ENCODE measurements at regions of chr10 and their contacts with region 1.

Region 1: DNA sequence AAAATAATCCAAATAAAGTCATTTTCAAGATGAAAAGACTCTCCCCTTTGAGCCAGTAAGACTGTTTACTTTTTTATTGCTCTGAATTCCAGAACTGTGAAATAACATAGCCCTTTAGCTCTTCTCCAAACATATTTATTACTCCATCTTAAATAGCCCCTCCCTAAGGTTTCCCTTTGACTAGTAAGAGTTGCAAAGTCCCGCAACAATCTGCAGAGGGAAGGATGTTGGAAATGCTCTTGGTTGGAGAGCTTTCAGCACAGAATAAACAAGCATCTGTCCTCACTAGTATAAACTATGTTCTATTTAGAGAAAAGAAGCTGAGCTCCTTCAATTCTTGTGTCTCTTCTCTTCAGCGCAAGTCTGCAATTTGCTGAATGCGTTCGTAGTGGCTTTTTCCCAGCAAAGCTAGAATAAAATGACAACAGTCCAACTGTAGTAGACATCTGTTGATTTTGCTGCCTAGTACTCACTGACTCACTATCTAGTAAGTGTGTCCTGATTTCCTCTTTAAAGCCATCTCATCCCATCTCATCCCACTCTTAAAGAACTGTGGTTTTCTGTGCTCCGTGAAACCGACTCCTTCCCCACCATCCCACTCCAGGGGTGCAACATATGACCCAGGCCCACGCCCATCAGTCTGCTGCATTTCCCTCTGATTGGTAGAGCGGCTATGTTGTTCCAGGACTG is 104.0 kb downstream of the FAM107B start:
- DNase-seq: peak in 1 of 2 experiments; percentile 60
- H3K4me3 ChIP-seq: no peak overlapping the region
- H3K4me3 Mint-ChIP-seq: peak overlapping the region; percentile 61
- H3K27ac Mint-ChIP-seq: peak overlapping the region; percentile 71
- H3K4me1 ChIP-seq: peaks cover 54% of the 10 kb centered on the region
- H3K4me1 Mint-ChIP-seq: peaks cover 43% of the 10 kb centered on the region
- H3K27me3 ChIP-seq: no peaks in the 10 kb centered on the region
- H3K27me3 Mint-ChIP-seq: no peaks in the 10 kb centered on the region
- CTCF ChIP-seq: no peak

Region 2: DNA sequence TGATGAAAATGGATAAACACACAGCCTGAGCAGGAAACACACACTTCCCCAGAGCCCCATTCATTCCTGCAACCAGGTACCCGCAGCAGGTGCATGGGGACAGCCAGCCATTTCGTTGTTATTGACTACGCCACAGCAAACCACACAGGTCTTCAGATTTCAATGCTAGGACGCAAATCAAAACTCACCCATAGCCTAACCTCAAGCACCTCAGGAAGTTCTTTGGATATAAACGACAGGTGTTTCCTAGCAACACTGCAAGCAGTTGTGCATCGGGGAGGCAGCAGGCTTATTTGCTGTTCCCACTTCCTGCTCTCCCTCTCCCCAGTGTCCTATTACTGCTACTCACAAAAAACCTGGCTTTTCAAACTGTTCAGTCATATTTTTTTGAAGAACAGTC is 163.5 kb before region 1 on chr10:
- CTCF ChIA-PET with region 1: no interaction called
- POLR2A ChIA-PET with region 1: no interaction called
- intact Hi-C with region 1: no loop called
- DNase-seq: no peak
- H3K4me3 ChIP-seq: no peak overlapping the region
- H3K4me3 Mint-ChIP-seq: no peak overlapping the region
- H3K27ac Mint-ChIP-seq: peak overlapping the region; percentile 19
- H3K4me1 ChIP-seq: 0 out of 2 replicates have a peak, but pooled peaks cover 4% of the 10 kb centered on the region
- H3K4me1 Mint-ChIP-seq: no peaks in the 10 kb centered on the region
- H3K27me3 ChIP-seq: no peaks in the 10 kb centered on the region
- H3K27me3 Mint-ChIP-seq: no peaks in the 10 kb centered on the region
- CTCF ChIP-seq: no peak

Region 3: DNA sequence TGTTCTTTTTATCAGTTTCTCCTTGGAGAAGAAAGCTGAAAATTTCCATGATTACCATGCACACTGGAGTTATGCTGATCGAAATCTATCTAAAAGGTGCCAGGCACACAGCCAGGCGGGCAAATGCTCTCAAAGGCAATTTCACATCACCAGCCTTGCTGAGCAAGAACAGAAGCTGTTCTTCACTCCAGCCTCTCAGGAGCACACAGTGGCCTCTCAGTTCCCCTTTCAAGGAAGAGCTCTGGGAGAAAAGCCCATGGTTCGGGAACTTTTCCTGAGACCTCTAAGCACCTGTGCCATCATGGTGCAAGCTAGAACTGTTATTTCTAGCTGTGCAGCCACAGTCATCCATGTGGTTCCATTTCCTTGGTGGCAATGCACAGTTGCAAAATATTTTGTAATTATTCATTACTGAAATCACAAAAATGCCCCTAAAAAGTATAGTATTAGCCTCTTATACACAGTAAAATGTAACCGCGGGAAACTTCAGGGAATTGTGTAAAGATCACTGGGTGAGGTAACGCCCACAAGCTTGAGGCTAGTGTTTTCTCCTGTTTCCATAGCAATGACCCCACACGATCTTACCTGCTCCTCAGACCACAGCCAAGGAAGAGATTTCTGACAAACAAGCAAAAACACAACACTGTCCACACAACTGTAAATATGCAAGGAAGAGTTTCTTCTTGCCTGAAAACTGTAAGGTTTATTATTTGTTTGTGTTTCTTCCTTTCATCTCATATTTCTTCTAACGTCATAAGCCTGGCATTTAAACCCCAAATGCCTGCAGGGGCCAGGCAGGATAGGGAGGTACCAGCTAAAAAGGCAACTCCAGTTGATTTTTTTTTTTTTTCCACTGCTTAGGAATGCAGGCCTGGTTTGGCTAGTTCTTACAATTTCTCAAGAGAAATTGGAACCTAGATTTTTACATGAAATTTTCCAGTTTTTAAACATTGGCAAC is 17.1 kb before region 1 on chr10:
- CTCF ChIA-PET with region 1: no interaction called
- POLR2A ChIA-PET with region 1: interaction called, 5 read pairs
- intact Hi-C with region 1: loop called (anchors 2 kb)
- DNase-seq: peak; percentile 78 to 88
- H3K4me3 ChIP-seq: no peak overlapping the region
- H3K4me3 Mint-ChIP-seq: peak overlapping the region; percentile 68
- H3K27ac Mint-ChIP-seq: peak overlapping the region; percentile 99
- H3K4me1 ChIP-seq: peaks cover 40% of the 10 kb centered on the region
- H3K4me1 Mint-ChIP-seq: peaks cover 32% of the 10 kb centered on the region
- H3K27me3 ChIP-seq: no peaks in the 10 kb centered on the region
- H3K27me3 Mint-ChIP-seq: no peaks in the 10 kb centered on the region
- CTCF ChIP-seq: no peak

Region 4: DNA sequence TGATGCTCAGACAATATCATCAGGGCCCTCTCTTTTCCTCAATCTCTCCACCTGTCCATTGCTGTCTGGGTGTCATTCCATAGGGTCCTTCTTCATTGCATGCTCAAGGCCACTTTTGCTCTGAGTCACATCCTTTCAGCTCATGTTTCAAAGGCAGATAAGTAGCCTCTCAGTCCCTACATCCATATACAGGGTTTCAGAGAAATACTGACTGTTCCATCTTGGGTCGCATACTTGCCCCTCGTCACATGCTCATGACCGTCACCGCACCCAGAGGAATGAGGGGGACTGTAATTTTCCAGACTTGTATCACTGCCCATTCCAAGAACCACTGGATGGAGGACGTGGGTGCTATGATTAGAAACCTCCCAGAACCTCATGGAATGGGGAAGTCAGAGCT is 10.6 kb after region 1 on chr10:
- CTCF ChIA-PET with region 1: no interaction called
- POLR2A ChIA-PET with region 1: no interaction called
- intact Hi-C with region 1: no loop called
- DNase-seq: no peak
- H3K4me3 ChIP-seq: no peak overlapping the region
- H3K4me3 Mint-ChIP-seq: no peak overlapping the region
- H3K27ac Mint-ChIP-seq: no peak overlapping the region
- H3K4me1 ChIP-seq: peaks cover 2% of the 10 kb centered on the region
- H3K4me1 Mint-ChIP-seq: peaks cover 22% of the 10 kb centered on the region
- H3K27me3 ChIP-seq: no peaks in the 10 kb centered on the region
- H3K27me3 Mint-ChIP-seq: no peaks in the 10 kb centered on the region
- CTCF ChIP-seq: no peak

Region 5: GRCh38 chr10:14812271-14812670 is 141.6 kb after region 1 on chr10:
- CTCF ChIA-PET with region 1: no interaction called
- POLR2A ChIA-PET with region 1: no interaction called
- intact Hi-C with region 1: loop called (anchors 5 kb)
- DNase-seq: peak; percentile 20 to 54
- H3K4me3 ChIP-seq: no peak overlapping the region
- H3K4me3 Mint-ChIP-seq: no peak overlapping the region
- H3K27ac Mint-ChIP-seq: peak overlapping the region; percentile 30
- H3K4me1 ChIP-seq: 0 out of 2 replicates have a peak, but pooled peaks cover 7% of the 10 kb centered on the region
- H3K4me1 Mint-ChIP-seq: peaks cover 6% of the 10 kb centered on the region
- H3K27me3 ChIP-seq: no peaks in the 10 kb centered on the region
- H3K27me3 Mint-ChIP-seq: no peaks in the 10 kb centered on the region
- CTCF ChIP-seq: no peak